ENCODE measurements at regions of chr14 and their contacts with region 1.

Region 1: DNA sequence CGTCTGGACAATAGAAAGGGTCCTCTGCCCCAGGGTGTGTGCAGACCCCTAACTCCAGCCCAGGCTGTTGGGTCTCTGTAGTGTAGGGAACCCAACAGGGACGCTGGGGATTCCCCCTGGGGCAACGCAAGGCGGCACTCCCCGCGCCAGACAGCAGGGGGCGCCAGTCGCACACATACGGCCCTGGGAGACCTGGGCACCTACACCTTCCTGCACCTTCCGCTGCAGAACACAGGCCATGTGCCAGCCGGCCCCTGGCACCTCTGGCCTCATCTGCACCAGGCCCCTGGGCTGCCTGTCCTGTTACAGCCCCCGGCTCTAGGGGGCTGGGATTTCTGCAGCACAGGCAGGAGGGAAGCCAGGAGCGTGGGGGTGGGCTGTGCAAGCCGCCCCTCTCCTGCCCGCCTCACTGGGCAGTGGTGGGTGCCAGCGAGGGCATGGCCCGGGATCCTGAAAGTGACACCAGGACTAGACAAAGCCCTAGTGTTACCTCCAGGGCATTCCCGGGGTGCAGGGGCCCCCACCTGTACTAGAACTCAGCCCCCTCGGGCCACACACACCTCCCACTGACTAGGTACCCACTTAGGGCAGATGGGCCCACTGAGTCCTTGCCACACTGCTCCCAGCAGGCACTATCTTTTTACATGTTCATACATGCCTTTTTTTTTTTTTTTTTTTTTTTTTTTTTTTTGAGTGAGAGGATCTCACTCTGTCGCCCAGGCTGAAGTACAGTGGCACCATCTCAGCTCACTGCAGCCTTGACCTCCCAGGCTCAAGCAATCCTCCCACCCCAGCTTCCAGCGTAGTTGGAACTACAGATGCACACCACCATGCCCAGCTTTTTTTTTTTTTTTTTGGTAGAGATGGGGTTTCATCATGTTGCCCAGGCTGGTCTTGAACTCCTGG is 37.5 kb downstream of the CCNK start:
- DNase-seq: peak; percentile 42
- ATAC-seq: peak; percentile 65
- H3K4me3 ChIP-seq: no peak overlapping the region
- H3K27ac ChIP-seq: no peak overlapping the region
- H3K4me1 ChIP-seq: peaks cover 47% of the 10 kb centered on the region
- H3K27me3 ChIP-seq: no peaks in the 10 kb centered on the region
- CTCF ChIP-seq: peak; percentile 93

Region 2: GRCh38 chr14:99360774-99361595 is 157.7 kb before region 1 on chr14:
- CTCF ChIA-PET with region 1: no interaction called
- POLR2A ChIA-PET with region 1: no interaction called
- in situ Hi-C with region 1: no loop called
- intact Hi-C with region 1: no loop called
- DNase-seq: no peak
- ATAC-seq: no peak; the same call in 1 of the 2 replicates
- H3K4me3 ChIP-seq: no peak overlapping the region
- H3K27ac ChIP-seq: no peak overlapping the region
- H3K4me1 ChIP-seq: no peaks in the 10 kb centered on the region
- H3K27me3 ChIP-seq: no peaks in the 10 kb centered on the region
- CTCF ChIP-seq: no peak

Region 3: DNA sequence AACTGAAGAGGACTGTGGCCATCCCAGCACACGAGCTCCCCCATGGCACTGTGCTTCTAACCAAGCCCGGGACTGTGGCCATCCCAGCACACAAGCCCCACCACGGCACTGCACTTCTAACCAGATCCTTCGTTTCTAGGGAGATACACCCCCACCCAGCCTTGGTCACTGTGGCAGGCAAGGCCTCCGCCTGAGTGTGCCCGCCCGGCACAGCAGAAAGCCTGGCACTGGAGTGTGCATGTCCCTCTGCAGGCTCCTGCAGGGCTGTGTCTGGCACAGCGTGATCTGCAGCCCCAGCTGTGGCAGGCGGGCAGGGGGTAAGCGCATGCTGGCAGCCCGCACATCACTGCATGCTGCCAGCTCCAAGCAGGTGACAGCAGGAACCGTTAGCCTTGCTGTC is 35.5 kb after region 1 on chr14:
- CTCF ChIA-PET with region 1: no interaction called
- POLR2A ChIA-PET with region 1: no interaction called
- in situ Hi-C with region 1: no loop called
- intact Hi-C with region 1: loop called (anchors 2 kb)
- DNase-seq: no peak
- ATAC-seq: peak; percentile 37
- H3K4me3 ChIP-seq: no peak overlapping the region
- H3K27ac ChIP-seq: no peak overlapping the region
- H3K4me1 ChIP-seq: peaks cover 53% of the 10 kb centered on the region
- H3K27me3 ChIP-seq: no peaks in the 10 kb centered on the region
- CTCF ChIP-seq: no peak